GM10248 (cell line): ENCODE measurements at regions of chr10 and their contacts with region 1.

Region 1: DNA sequence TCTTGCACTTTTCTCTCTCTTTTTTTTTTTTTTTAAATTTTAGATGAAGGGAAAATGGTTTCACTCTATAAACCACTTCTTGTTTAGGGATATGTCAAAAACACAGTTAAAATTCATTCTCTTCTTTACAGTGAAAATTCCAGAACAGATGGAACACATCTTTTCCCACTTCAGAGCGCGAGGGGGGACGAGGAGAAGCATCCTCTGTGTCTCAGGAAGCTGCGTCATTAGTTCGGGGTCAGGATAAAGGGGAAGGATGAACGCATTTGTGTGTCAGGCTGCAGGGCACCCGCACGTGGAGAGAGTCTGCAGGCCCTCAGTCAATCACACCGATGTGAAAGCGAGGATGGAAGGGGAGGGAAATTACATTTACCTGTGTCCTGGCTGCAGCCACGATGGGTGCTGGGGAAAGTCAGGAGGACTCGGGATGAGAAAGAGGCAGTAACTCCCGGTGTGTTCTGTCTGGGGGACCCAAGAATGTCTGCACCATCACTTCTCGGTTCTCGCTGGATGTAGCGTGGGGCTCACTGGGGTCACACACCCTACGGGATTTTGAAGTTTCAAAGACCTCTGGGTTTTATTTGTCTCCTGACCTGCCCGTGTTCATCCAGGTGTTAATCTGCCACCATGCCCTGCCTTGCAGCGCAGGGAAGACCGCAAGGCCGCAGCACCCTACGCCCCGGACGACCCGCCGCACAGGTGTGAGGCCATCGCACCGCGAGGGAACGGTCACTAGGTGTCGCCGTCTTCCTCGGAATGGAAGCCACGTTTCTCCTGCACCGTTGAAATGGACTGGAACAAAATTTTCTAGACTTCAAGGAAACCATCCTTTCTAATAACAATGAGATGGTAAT is 66.7 kb upstream of the PITRM1 start:
- DNase-seq: peak; percentile 77
- CTCF ChIP-seq: peak; percentile 91

Region 2: GRCh38 chr10:3265088-3265487 is 25.8 kb after region 1 on chr10:
- CTCF ChIA-PET with region 1: no interaction called
- POLR2A ChIA-PET with region 1: no interaction called
- DNase-seq: no peak
- CTCF ChIP-seq: no peak

Region 3: DNA sequence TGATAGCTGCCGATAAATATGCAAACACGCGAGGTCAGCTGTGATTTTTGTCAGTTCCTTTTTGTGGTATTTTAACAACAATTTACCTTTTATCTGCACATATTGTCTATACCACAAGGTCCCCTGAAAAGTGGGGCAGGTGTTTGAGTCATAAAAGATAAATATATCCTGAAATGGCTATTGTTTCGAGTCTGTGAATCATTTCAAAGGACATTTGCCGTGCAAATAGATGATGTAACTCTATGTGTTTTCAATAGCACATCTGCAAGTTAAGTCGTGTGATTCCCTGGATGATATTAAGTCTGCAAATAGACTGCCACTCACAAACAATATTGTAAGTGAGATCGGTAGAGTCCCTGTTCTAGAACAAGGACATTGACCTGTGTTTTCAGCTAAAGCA is 126.3 kb after region 1 on chr10:
- CTCF ChIA-PET with region 1: no interaction called
- POLR2A ChIA-PET with region 1: no interaction called
- DNase-seq: no peak
- CTCF ChIP-seq: no peak

Region 4: DNA sequence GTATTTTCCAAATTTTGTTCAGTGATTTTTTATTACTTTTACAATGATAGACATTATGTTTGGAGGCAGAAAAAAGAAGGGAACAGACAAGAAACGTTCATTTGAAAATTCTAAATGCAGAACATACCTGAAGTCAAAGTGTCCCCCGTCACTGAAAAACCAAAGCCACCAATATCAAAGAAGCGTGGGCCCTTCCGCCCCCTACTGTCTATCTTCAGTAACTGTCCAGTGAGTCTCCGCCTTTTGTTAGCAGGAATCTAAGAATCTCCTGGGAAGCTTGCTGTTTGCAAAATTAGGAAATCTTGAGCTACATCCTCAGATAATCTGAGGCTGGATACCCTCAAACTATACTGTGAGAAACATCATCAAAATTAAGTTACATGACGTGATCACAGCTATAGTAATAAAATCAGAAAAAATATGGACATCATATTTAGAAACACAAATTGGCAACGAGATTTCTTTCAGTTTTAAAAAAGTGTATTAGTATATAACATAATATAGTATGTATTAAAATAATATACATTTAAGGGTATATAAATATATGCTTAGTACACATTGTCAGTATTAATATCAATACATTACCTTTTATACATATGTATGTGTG is 1417.4 kb after region 1 on chr10:
- CTCF ChIA-PET with region 1: interaction called, 33 read pairs
- POLR2A ChIA-PET with region 1: no interaction called
- DNase-seq: peak; percentile 38
- CTCF ChIP-seq: peak; percentile 75